GM10248 (cell line): ENCODE measurements at regions of chr7 and their contacts with region 1.

Region 1: GRCh38 chr7:43700059-43700501 is 29.2 kb downstream of the COA1 start:
- DNase-seq: no peak
- CTCF ChIP-seq: peak; percentile 44

Region 2: GRCh38 chr7:43454936-43455518 is 245.1 kb before region 1 on chr7:
- CTCF ChIA-PET with region 1: interaction called, 11 read pairs
- POLR2A ChIA-PET with region 1: no interaction called
- DNase-seq: peak; percentile 66
- CTCF ChIP-seq: peak; percentile 52

Region 3: DNA sequence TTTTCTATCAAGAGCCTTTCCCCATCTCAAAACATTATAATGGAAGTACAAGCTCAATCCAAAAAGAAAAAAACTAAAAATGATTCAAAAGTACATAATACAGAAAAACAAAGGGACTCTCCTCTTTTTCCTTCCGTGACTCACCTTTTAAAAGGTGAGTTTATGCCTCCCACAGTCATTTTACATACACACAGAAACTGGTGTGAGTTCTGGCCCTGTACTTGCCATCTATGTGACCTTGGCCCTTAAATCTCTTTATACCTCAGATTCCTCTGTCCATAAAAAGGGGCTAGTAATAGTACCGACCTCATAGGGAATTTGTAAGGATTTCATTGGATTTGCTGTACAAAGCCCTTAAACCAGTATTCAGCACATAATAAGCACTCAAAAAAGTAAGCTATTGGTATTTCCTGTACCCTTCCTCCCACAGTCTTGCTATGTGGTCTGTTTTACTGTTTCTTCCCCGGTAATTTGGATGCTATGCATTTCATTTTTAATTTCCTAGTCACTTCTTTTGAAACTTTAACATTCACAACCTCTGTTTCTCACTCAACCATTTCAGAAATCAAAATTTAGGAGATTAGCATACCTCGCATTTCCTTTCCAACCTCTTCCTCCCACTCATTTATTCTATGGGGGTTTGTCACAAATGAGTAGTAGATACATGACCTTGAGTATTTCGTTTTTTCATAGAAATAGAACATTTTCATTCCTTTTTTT is 78.2 kb before region 1 on chr7:
- CTCF ChIA-PET with region 1: interaction called, 10 read pairs
- POLR2A ChIA-PET with region 1: no interaction called
- DNase-seq: no peak
- CTCF ChIP-seq: no peak

Region 4: DNA sequence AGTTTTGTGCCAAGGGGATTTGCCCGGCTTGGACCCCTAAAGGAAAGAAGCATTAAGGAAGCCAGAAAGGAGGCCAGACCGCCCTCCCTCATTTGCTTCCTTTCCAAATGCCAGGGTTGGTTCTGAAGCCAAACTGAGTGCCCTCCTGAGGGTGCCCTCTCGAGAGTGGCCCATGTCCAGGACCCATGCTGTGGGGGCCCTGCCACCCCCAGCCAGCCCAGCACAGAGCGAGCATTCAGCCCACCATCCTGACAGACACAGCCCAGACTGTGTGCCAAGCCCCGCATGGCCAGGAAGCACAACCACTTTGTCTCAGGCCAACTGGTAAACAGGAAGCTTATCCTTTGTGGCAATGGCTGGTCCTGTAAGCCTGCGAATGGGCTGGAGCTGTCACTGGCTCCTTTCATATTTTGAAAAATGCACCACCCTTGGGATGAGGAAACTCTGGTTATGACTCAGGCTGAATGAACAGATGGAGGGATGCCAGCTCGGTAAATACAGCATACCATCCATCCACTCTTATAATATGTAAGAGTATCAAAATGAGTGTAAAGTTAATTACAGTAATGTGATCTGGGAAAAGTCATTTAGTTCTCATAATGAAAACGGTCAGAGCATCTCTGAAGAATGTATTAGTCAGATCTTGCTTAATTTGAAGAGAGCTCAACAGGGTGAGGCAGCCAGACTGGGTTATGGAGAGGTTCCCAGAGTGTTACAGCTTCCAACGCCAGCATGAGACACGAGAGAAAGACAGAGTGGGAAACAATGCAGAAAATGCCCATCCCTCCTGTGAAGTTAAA is 52.2 kb before region 1 on chr7:
- CTCF ChIA-PET with region 1: interaction called, 93 read pairs
- POLR2A ChIA-PET with region 1: interaction called, 7 read pairs
- DNase-seq: peak; percentile 31
- CTCF ChIP-seq: no peak

Region 5: DNA sequence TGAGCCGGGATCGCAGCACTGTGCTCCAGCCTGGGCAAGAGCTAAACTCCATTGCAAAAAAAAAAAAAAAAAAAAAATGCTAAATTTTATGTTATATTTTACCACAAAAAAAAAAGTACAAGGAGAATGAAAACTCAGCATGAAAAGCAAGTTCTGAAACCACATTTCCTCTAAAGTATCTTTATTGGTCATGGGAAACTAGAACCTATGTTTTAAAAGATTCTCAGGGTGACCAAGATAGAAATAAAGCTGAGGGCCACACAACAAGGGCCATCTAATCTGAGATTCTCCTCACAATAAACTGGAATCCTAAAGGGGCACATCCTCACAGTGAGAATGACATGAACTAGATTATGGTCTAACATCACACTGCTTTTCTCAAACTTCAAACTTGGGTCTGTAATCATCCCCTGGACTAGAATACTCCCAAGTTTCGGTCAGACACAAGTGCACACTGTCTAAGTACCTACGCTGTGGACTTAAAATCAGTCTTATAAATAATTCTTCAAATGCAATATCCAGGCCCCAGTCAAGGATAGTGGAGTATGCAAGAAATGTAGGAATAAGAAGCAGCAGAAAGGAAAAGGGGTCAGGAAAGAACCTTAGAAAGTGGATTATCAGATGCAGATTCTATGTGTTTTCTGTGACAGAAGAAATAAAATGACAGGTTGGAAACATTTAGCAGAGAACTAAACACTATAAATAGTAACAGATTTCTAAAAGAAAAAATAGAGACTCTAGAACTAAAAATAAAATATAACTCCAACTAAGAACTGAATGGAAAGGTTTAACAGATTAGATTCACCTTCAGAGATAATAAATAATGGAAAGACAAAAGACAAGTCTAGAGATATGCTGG is 20.6 kb before region 1 on chr7:
- CTCF ChIA-PET with region 1: interaction called, 16 read pairs
- POLR2A ChIA-PET with region 1: no interaction called
- DNase-seq: peak; percentile 35
- CTCF ChIP-seq: no peak

Region 6: GRCh38 chr7:43729214-43729923 is 29.3 kb after region 1 on chr7 and contains the start of gene COA1:
- CTCF ChIA-PET with region 1: interaction called, 15 read pairs
- POLR2A ChIA-PET with region 1: no interaction called
- DNase-seq: peak; percentile 83
- CTCF ChIP-seq: no peak

Region 7: GRCh38 chr7:43879477-43879876 is 179.4 kb after region 1 on chr7:
- CTCF ChIA-PET with region 1: no interaction called
- POLR2A ChIA-PET with region 1: no interaction called
- DNase-seq: no peak
- CTCF ChIP-seq: no peak